Mucosa of descending colon (tissue), 3 donors: ENCODE measurements at regions of chr5 and their contacts with region 1.

Region 1: GRCh38 chr5:139422307-139422893 is 16.9 kb downstream of the DNAJC18 start:
- DNase-seq: peak in 1 of 3 donors; percentile 81
- ATAC-seq: peak; percentile 71
- H3K4me3 ChIP-seq: no peak overlapping the region
- H3K4me1 ChIP-seq: peaks cover 20% of the 10 kb centered on the region
- CTCF ChIP-seq: peak; percentile 49

Region 2: GRCh38 chr5:139301808-139302499 is 120.4 kb before region 1 on chr5:
- intact Hi-C with region 1: no loop called
- DNase-seq: no peak
- ATAC-seq: no peak
- H3K4me3 ChIP-seq: no peak overlapping the region
- H3K4me1 ChIP-seq: peaks cover 42% of the 10 kb centered on the region
- CTCF ChIP-seq: no peak

Region 3: GRCh38 chr5:139517683-139518564 is 95.5 kb after region 1 on chr5:
- intact Hi-C with region 1: loop called (anchors 2 to 5 kb)
- DNase-seq: peak; percentile 93 to 98 (median 96)
- ATAC-seq: peak; percentile 98
- H3K4me3 ChIP-seq: peak overlapping the region; percentile 24
- H3K4me1 ChIP-seq: peaks cover 3% of the 10 kb centered on the region
- CTCF ChIP-seq: peak; percentile 99

Region 4: GRCh38 chr5:139949710-139950109 is 527.3 kb after region 1 on chr5:
- intact Hi-C with region 1: no loop called
- DNase-seq: no peak
- ATAC-seq: no peak
- H3K4me3 ChIP-seq: no peak overlapping the region
- H3K4me1 ChIP-seq: no peaks in the 10 kb centered on the region
- CTCF ChIP-seq: no peak